Activated naive CD4-positive, alpha-beta T cell treated with anti-CD3 and anti-CD28 coated beads for 36 hours (primary cell): ENCODE measurements at regions of chr20 and their contacts with region 1.

Region 1: DNA sequence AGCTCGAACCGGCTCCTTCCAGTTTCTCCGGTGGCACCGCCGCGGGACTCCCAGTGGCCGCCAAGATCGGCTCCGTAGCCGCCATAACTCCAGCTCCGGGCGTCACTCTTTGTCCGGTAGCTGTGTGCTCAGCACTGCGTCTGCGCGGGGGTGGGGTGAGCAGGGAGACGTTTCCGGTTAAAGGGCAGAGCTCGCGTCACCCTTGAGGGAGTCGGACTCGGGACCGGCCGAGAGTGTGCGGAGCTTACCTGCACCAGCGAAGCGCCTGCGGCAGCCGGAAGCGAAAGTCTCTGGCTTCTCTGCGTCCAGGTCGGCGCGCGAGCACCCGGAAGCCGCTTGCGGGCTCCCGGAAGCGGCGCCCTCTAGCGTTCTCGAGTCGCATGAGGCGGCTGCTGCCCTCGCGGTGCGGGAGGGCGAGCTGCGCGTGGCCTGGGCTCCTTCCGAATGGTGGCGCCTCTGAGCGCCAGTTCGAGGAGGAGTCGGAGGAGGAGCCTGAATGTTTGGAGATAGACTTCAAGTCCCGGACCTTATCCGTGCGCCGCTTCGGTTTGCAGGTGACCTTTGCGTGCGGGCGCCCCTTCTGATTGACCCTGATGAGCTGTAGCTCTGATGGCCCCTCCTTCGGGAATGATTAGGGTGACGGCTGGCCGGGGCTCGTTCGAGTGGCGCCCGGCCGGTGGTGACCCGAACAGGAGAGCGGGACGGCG is at the start of gene SCAND1:
- DNase-seq: peak; percentile 98
- H3K4me3 Mint-ChIP-seq: peak within 1 kb of the TSS; percentile 99
- H3K27ac Mint-ChIP-seq: peak within 1 kb of the TSS; percentile 98
- H3K4me1 Mint-ChIP-seq: peaks cover 16% of the 10 kb centered on the region
- H3K27me3 Mint-ChIP-seq: no peaks in the 10 kb centered on the region
- total RNA-seq, gene SCAND1: 41.9 to 43.1 TPM

Region 2: DNA sequence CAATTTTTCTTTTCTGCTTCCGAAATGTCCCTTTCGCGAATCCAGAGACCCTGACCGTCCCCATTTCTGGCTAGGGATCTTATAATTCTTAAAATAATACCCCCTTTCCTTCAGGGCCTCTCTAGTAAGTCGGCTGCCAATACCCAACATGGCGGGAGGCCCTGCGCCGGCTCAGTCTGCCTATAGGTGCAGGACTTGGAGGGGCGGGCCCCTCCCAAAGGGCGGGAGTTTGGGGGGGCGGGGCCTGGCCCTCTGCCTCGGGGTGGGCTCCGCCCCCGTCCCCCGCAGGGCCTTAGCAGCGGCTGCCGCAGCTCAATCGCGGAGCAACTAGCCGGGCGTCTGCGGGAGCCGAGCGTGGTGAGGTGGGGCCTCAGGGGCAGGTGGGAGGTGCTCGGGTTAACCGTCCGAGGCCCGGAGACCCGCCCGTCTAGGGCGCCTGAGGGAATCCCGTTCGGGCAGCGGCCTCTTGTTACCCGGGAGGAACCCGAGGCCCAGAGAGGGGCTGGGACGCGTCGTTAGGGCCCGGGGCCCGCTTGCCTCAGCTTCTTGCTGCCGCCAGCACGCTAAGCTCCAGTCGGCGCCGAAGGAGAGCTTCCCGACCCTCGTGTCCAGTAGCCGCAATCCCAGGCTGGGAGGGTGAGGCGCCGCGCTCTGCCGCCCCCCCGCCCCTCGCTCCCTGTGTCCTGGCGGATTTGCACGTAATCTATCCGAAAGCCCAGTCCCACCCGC is 499.3 kb before region 1 on chr20 and contains the start of gene CEP250:
- CTCF ChIA-PET with region 1: no interaction called
- intact Hi-C with region 1: loop called (anchors 2 kb)
- DNase-seq: peak; percentile 94
- H3K4me3 Mint-ChIP-seq: peak within 1 kb of the TSS; percentile 89
- H3K27ac Mint-ChIP-seq: peak within 1 kb of the TSS; percentile 99
- H3K4me1 Mint-ChIP-seq: peaks cover 27% of the 10 kb centered on the region
- H3K27me3 Mint-ChIP-seq: no peaks in the 10 kb centered on the region
- total RNA-seq, gene CEP250: 43.4 to 46.9 TPM

Region 3: GRCh38 chr20:35619196-35620095 is 334.9 kb before region 1 on chr20:
- CTCF ChIA-PET with region 1: interaction called, 3 read pairs
- intact Hi-C with region 1: loop called (anchors 1 kb)
- DNase-seq: peak; percentile 88
- H3K4me3 Mint-ChIP-seq: peak overlapping the region; percentile 82
- H3K27ac Mint-ChIP-seq: peak overlapping the region; percentile 70
- H3K4me1 Mint-ChIP-seq: peaks cover 47% of the 10 kb centered on the region
- H3K27me3 Mint-ChIP-seq: peaks cover 4% of the 10 kb centered on the region

Region 4: DNA sequence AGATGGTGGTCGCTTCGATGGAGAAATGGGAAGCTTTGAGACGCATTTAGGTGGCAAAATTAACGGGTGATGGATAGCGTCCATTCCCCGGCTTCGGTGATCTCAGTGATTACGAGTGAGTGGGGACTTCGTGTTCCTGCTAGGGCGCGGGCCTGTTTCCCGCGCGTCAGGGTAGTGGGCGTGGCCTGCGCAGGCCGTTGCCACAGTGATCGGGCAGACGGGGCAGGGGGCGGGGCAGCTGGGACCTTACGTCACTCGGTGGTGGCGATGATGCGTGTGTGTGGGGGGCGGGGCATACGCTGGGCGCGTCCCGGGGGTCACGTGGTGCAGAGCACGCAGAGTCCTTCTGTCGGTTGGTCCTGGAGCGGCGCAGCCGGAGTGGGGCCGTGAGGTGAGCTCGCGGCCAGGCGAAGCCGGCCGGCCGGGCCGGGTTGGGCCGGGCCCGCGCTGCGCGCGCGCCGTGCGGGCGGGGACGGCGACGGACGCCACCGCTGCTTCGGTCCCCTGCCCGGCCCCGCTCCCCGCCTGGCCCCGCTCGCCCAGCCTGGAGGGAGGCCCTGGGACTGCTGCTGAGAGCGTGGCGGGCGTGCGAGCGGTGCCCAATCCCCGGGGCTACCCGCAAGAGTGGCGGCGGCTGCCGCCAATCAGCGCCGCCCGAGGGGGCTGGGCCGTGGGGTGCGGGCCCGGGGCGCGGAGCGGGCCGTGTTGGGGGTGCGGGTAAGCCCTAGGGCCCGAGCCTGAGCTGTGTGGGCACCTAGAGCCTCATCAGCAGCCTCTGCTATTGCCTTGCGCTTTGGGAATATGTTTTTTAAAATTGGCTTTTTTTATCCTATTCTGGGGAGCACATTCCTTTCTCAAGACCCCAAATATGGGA is 182.4 kb before region 1 on chr20 and contains the start of gene PHF20:
- CTCF ChIA-PET with region 1: interaction called, 7 read pairs
- intact Hi-C with region 1: loop called (anchors 1 kb)
- DNase-seq: peak; percentile 100
- H3K4me3 Mint-ChIP-seq: peak within 1 kb of the TSS; percentile 80
- H3K27ac Mint-ChIP-seq: peak within 1 kb of the TSS; percentile 82
- H3K4me1 Mint-ChIP-seq: peaks cover 74% of the 10 kb centered on the region
- H3K27me3 Mint-ChIP-seq: no peaks in the 10 kb centered on the region
- total RNA-seq, gene PHF20: 39.8 to 46.0 TPM

Region 5: DNA sequence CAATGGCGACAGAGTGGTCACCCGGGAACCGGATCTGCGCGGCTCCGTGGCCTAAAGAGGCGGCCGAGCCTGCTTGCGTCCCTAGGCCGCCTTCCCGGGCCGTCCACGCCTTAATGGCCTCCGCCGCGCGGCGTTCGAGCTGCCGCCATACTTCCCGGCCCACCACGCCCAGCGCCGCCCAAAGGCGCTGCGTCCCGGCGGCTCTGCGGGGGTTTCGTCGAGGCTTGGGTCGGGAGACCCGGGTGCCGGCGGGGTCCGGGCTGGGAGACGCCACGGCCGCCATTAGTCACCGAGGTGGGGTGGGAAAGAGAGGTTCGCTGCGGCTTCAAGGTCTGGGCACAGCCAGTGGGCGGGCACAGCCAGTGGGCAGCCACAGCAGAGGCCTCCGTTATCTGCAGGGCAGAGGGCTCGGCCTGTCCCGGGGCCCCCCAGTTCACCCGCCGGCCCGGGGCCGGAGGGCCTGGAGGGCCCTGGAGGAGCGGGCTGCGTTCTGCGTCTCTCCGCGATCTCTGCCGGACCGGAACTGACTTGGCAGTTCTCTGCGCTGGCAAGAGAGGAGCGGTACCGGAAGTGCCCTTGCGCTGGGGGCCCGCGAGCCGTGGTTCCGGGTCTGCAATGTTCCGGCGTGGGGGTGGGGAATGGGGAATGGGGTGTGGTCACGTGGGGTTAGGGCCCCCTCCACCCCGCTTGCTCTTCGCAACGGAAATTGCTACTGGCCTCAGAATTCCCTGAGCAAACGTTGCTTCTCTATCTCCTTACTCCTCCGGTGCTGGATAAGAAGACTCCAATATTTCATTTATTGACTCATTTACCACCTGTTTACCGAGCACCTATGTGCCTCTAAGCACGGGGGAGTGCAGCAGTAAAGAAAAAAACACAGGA is 96.3 kb after region 1 on chr20:
- CTCF ChIA-PET with region 1: interaction called, 4 read pairs
- intact Hi-C with region 1: loop called (anchors 2 kb)
- DNase-seq: peak; percentile 95
- H3K4me3 Mint-ChIP-seq: peak overlapping the region; percentile 82
- H3K27ac Mint-ChIP-seq: peak overlapping the region; percentile 83
- H3K4me1 Mint-ChIP-seq: peaks cover 35% of the 10 kb centered on the region
- H3K27me3 Mint-ChIP-seq: no peaks in the 10 kb centered on the region

Region 6: DNA sequence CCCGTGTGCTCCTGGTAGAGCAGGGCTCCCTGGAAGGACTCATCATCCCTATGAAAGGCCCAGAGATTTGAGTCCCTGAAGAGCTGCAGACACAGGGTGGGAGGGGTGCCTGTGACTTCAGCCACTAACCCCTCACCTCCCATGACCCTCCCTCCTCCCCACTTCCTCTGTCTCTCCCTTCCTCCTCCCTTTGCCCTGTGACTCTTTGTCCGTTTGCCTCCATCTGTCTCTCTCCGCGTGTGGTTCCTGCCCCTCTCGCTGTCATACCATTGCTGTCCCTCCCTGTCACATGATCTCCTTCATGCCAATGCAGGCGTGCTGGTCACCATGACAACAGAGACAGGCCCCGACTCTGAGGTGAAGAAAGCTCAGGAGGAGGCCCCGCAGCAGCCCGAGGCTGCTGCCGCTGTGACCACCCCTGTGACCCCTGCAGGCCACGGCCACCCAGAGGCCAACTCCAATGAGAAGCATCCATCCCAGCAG is 219.1 kb after region 1 on chr20:
- CTCF ChIA-PET with region 1: no interaction called
- intact Hi-C with region 1: no loop called
- DNase-seq: no peak
- H3K4me3 Mint-ChIP-seq: no peak overlapping the region
- H3K27ac Mint-ChIP-seq: no peak overlapping the region
- H3K4me1 Mint-ChIP-seq: peaks cover 3% of the 10 kb centered on the region
- H3K27me3 Mint-ChIP-seq: no peaks in the 10 kb centered on the region

Region 7: DNA sequence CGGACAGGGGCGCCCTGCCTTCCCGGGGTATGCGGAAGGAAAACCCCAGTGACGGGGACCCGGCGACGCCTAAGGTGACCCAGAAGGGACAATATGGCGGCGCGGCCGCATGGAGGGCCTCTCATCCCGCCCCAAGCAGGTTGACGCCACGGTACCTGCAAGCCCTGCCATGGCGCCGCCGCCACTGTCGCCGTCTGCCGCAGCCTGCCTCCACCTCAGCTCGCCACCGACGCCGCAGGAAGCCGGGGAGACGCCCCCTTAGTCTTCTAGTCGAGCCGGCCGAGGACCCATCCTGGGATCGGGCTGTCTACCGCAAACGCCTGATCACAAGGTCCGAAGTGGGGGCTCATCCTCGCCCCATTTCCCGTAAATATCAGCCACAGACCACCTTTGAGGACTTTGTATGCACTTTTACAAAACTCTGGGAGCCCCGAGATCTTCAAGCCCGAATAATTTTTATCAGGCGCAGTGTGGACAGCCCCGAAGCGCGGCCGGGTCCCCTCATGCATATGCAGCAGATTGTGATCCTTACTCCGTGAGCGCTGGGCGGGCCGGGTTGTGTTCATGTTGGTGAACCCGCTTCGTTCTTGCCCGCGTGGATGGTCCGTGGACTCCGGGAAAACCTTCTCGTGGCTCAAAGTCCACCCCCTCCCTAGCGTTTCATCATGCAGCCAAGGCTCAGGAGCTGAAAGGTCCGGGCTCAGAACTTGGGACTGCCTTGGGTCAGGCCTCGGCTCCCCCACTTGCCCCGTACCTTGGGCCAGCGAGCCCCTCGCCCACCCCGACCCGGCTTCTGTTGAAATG is 1573.5 kb after region 1 on chr20 and contains the start of gene BLCAP:
- CTCF ChIA-PET with region 1: no interaction called
- intact Hi-C with region 1: loop called (anchors 5 kb)
- DNase-seq: peak; percentile 94
- H3K4me3 Mint-ChIP-seq: peak within 1 kb of the TSS; percentile 87
- H3K27ac Mint-ChIP-seq: peak within 1 kb of the TSS; percentile 99
- H3K4me1 Mint-ChIP-seq: peaks cover 42% of the 10 kb centered on the region
- H3K27me3 Mint-ChIP-seq: no peaks in the 10 kb centered on the region
- total RNA-seq, gene BLCAP: 14.2 to 16.2 TPM